GM10248 (cell line): ENCODE measurements at regions of chr11 and their contacts with region 1.

Region 1: GRCh38 chr11:60750926-60751325 is 5.7 kb upstream of the MS4A15 start:
- DNase-seq: no peak
- CTCF ChIP-seq: no peak

Region 2: GRCh38 chr11:60739114-60739513 is 11.8 kb before region 1 on chr11:
- CTCF ChIA-PET with region 1: interaction called, 10 read pairs
- POLR2A ChIA-PET with region 1: no interaction called
- DNase-seq: no peak
- CTCF ChIP-seq: no peak